CD8-positive, alpha-beta T cell (primary cell): ENCODE measurements at regions of chr11 and their contacts with region 1.

Region 1: DNA sequence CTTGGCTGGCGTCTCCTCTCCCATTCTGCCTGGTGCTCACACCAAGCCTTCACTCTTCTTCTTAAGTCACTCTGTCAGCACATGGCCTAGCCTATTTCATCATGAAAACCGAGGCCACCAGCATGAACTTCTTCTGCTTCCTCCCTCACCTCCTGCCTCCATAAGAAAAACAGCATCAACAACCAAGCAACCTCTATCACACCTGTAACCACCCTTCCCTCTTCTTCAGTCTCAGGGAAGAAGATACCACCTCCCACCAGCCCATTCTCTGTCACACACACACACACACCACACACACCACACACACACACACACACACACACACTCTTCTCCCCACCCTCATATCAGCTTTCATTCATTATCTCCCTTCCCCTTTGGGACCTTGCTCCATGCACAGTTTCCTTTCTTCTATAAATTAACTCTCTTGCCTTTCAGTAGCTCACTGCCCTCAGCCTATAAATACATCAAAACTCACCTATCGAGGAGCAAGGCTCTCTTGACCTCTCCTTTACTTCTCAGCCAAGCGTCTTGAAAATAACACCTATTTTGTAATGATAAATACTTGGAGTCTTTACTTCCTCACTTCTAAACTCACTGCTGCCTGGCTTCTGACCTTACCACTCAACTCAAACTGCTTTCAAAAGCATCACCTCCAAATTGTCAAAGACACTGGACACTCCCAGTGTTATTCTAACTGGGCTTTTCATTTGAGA is 36.6 kb downstream of the SC5D start:
- DNase-seq: peak in 2 of 9 experiments; percentile 28 to 43
- ATAC-seq: peak; percentile 45
- H3K4me3 ChIP-seq: no peak overlapping the region
- H3K4me3 Mint-ChIP-seq: no peak overlapping the region
- H3K27ac ChIP-seq: peak overlapping the region in 1 of 2 experiments; percentile 4
- H3K27ac Mint-ChIP-seq: no peak overlapping the region
- H3K4me1 ChIP-seq: peaks cover 23% of the 10 kb centered on the region
- H3K4me1 Mint-ChIP-seq: peaks cover 4% of the 10 kb centered on the region
- H3K27me3 ChIP-seq: no peaks in the 10 kb centered on the region
- H3K27me3 Mint-ChIP-seq: no peaks in the 10 kb centered on the region
- CTCF ChIP-seq: no peak

Region 2: GRCh38 chr11:120608760-120609211 is 720.3 kb before region 1 on chr11:
- CTCF ChIA-PET with region 1: no interaction called
- POLR2A ChIA-PET with region 1: no interaction called
- intact Hi-C with region 1: no loop called
- DNase-seq: no peak
- ATAC-seq: no peak
- H3K4me3 ChIP-seq: no peak overlapping the region
- H3K4me3 Mint-ChIP-seq: no peak overlapping the region
- H3K27ac ChIP-seq: no peak overlapping the region
- H3K27ac Mint-ChIP-seq: no peak overlapping the region
- H3K4me1 ChIP-seq: no peaks in the 10 kb centered on the region
- H3K4me1 Mint-ChIP-seq: no peaks in the 10 kb centered on the region
- H3K27me3 ChIP-seq: no peaks in the 10 kb centered on the region
- H3K27me3 Mint-ChIP-seq: peaks cover 10% of the 10 kb centered on the region
- CTCF ChIP-seq: no peak

Region 3: DNA sequence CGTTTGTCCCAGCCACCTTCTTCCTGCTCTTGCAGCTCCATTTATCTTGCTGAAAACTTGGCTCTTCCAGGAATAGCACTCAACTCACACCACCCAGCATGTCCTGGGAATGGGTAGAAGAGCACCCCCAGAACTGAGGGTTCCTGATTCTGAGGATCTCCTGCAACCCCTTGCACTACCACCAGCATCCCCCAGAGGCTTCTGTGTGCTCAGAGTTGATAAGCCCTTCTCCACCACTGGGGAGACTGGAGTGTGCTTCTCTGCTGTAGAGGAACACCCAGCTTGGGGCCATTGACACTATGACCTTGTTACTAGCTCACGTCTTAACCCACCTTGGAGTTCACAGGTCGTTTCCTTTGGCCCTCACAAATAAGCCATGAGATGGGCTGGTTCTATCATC is 696.5 kb before region 1 on chr11:
- CTCF ChIA-PET with region 1: no interaction called
- POLR2A ChIA-PET with region 1: no interaction called
- intact Hi-C with region 1: no loop called
- DNase-seq: no peak
- ATAC-seq: no peak
- H3K4me3 ChIP-seq: no peak overlapping the region
- H3K4me3 Mint-ChIP-seq: no peak overlapping the region
- H3K27ac ChIP-seq: no peak overlapping the region
- H3K27ac Mint-ChIP-seq: no peak overlapping the region
- H3K4me1 ChIP-seq: no peaks in the 10 kb centered on the region
- H3K4me1 Mint-ChIP-seq: no peaks in the 10 kb centered on the region
- H3K27me3 ChIP-seq: no peaks in the 10 kb centered on the region
- H3K27me3 Mint-ChIP-seq: peaks cover 4% of the 10 kb centered on the region
- CTCF ChIP-seq: no peak

Region 4: GRCh38 chr11:121132196-121132976 is 196.7 kb before region 1 on chr11:
- CTCF ChIA-PET with region 1: no interaction called
- POLR2A ChIA-PET with region 1: no interaction called
- intact Hi-C with region 1: no loop called
- DNase-seq: no peak
- ATAC-seq: no peak
- H3K4me3 ChIP-seq: no peak overlapping the region
- H3K4me3 Mint-ChIP-seq: no peak overlapping the region
- H3K27ac ChIP-seq: no peak overlapping the region
- H3K27ac Mint-ChIP-seq: no peak overlapping the region
- H3K4me1 ChIP-seq: no peaks in the 10 kb centered on the region
- H3K4me1 Mint-ChIP-seq: no peaks in the 10 kb centered on the region
- H3K27me3 ChIP-seq: no peaks in the 10 kb centered on the region
- H3K27me3 Mint-ChIP-seq: peaks cover 2% of the 10 kb centered on the region
- CTCF ChIP-seq: no peak

Region 5: GRCh38 chr11:121367001-121367843 is 38.1 kb after region 1 on chr11:
- CTCF ChIA-PET with region 1: no interaction called
- POLR2A ChIA-PET with region 1: interaction called, 4 read pairs
- intact Hi-C with region 1: loop called in 1 of 2 experiments (anchors 5 kb)
- DNase-seq: peak in 6 of 9 experiments; percentile 6 to 76 (median 38)
- ATAC-seq: peak; percentile 79
- H3K4me3 ChIP-seq: peak overlapping the region; percentile 17 to 36
- H3K4me3 Mint-ChIP-seq: peak overlapping the region; percentile 78
- H3K27ac ChIP-seq: peak overlapping the region; percentile 12 to 46
- H3K27ac Mint-ChIP-seq: peak overlapping the region; percentile 91
- H3K4me1 ChIP-seq: peaks cover 18% of the 10 kb centered on the region
- H3K4me1 Mint-ChIP-seq: peaks cover 35% of the 10 kb centered on the region
- H3K27me3 ChIP-seq: no peaks in the 10 kb centered on the region
- H3K27me3 Mint-ChIP-seq: no peaks in the 10 kb centered on the region
- CTCF ChIP-seq: no peak

Region 6: DNA sequence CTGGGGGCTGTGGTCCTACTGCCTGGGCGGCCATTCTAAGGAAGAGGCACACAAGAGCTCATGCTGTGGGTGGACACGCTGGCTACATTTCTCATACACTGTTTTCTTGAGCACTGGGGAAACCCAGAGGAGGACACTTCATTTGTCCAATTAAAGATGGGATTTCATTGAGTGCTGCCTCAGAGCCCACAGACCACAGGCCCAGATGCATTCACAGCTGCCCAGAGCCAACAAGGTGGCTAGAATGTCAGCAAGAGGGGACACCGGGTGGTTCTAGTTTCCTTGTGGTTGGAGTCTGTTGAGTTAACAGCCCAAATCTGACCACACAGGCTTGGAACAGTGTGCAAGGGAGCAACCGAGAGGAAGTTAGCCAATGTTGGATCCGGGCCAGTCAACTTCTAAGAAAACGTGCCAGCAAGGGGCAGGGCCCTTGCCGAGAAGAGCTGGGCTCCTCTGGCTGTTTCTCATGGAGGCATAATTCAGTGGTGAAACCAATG is 88.0 kb after region 1 on chr11:
- CTCF ChIA-PET with region 1: no interaction called
- POLR2A ChIA-PET with region 1: no interaction called
- intact Hi-C with region 1: loop called in 1 of 2 experiments (anchors 5 kb)
- DNase-seq: peak; percentile 18 to 73 (median 49)
- ATAC-seq: peak; percentile 30
- H3K4me3 ChIP-seq: no peak overlapping the region
- H3K4me3 Mint-ChIP-seq: peak overlapping the region; percentile 38
- H3K27ac ChIP-seq: peak overlapping the region; percentile 33 to 61
- H3K27ac Mint-ChIP-seq: peak overlapping the region; percentile 87
- H3K4me1 ChIP-seq: peaks cover 57% of the 10 kb centered on the region
- H3K4me1 Mint-ChIP-seq: peaks cover 58% of the 10 kb centered on the region
- H3K27me3 ChIP-seq: no peaks in the 10 kb centered on the region
- H3K27me3 Mint-ChIP-seq: no peaks in the 10 kb centered on the region
- CTCF ChIP-seq: no peak

Region 7: GRCh38 chr11:121437018-121437685 is 108.0 kb after region 1 on chr11:
- CTCF ChIA-PET with region 1: no interaction called
- POLR2A ChIA-PET with region 1: no interaction called
- intact Hi-C with region 1: no loop called
- DNase-seq: no peak
- ATAC-seq: no peak
- H3K4me3 ChIP-seq: no peak overlapping the region
- H3K4me3 Mint-ChIP-seq: no peak overlapping the region
- H3K27ac ChIP-seq: no peak overlapping the region
- H3K27ac Mint-ChIP-seq: peak overlapping the region; percentile 2
- H3K4me1 ChIP-seq: peaks cover 5% of the 10 kb centered on the region
- H3K4me1 Mint-ChIP-seq: peaks cover 46% of the 10 kb centered on the region
- H3K27me3 ChIP-seq: no peaks in the 10 kb centered on the region
- H3K27me3 Mint-ChIP-seq: no peaks in the 10 kb centered on the region
- CTCF ChIP-seq: no peak